A673 (cell line): ENCODE measurements at regions of chr17 and their contacts with region 1.

Region 1: GRCh38 chr17:29568331-29569244 is at the start of gene TP53I13:
- DNase-seq: peak; percentile 95
- H3K4me3 ChIP-seq: peak within 1 kb of the TSS; percentile 83
- H3K27ac ChIP-seq: peak within 1 kb of the TSS; percentile 88
- H3K4me1 ChIP-seq: peaks cover 18% of the 10 kb centered on the region
- H3K27me3 ChIP-seq: no peaks in the 10 kb centered on the region
- CTCF ChIP-seq: no peak
- total RNA-seq, gene TP53I13: 34.6 and 41.4 TPM in 2 replicates

Region 2: GRCh38 chr17:29622337-29623282 is 54.0 kb after region 1 on chr17 and contains the start of gene CORO6:
- CTCF ChIA-PET with region 1: no interaction called
- POLR2A ChIA-PET with region 1: no interaction called
- intact Hi-C with region 1: loop called (anchors 10 kb)
- DNase-seq: peak; percentile 78
- H3K4me3 ChIP-seq: peak within 1 kb of the TSS; percentile 76
- H3K27ac ChIP-seq: peak within 1 kb of the TSS; percentile 62
- H3K4me1 ChIP-seq: peaks cover 33% of the 10 kb centered on the region
- H3K27me3 ChIP-seq: no peaks in the 10 kb centered on the region
- CTCF ChIP-seq: no peak
- total RNA-seq, gene CORO6: 19.7 and 28.9 TPM in 2 replicates